Sciatic nerve (tissue), 2 donors: ENCODE measurements at regions of chr6 and their contacts with region 1.

Region 1: DNA sequence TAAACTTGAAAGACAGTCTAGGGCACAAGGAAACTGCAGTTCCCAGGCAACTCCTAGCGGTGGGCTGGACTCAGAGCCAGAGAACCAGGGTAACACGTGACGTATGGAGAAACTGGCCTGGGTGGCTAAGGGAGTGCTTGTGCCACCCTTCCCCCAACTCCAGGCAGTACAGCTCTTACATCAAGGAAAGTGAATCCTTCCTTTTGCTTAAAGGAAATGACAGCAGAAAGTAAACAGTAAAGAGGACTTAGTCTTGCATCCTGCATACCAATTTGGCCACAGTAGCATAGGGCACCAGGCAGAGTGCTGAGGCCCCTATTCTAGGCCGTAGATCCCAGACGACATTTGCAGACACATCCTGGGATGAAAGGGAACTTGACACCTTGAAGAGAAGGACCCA is 322.8 kb downstream of the CD109 start:
- DNase-seq: no peak
- ATAC-seq: no peak

Region 2: GRCh38 chr6:73367761-73368355 is 651.0 kb before region 1 on chr6:
- intact Hi-C with region 1: loop called (anchors 5 kb)
- DNase-seq: no peak
- ATAC-seq: no peak